Activated CD8-positive, alpha-beta T cell treated with anti-CD3 and anti-CD28 coated beads, Interleukin-2, amount 10 ng/mL, durations not matched to agents 7 days and 5 days (primary cell): ENCODE measurements at regions of chr11 and their contacts with region 1.

Region 1: GRCh38 chr11:14519917-14520746 is at the start of gene PSMA1:
- DNase-seq: peak; percentile 96
- ATAC-seq: peak; percentile 94
- H3K4me3 Mint-ChIP-seq: peak within 1 kb of the TSS; percentile 93
- H3K27ac Mint-ChIP-seq: peak within 1 kb of the TSS; percentile 94
- H3K4me1 Mint-ChIP-seq: peaks cover 29% of the 10 kb centered on the region
- H3K27me3 Mint-ChIP-seq: no peaks in the 10 kb centered on the region
- total RNA-seq, gene PSMA1: 211 to 215 TPM

Region 2: DNA sequence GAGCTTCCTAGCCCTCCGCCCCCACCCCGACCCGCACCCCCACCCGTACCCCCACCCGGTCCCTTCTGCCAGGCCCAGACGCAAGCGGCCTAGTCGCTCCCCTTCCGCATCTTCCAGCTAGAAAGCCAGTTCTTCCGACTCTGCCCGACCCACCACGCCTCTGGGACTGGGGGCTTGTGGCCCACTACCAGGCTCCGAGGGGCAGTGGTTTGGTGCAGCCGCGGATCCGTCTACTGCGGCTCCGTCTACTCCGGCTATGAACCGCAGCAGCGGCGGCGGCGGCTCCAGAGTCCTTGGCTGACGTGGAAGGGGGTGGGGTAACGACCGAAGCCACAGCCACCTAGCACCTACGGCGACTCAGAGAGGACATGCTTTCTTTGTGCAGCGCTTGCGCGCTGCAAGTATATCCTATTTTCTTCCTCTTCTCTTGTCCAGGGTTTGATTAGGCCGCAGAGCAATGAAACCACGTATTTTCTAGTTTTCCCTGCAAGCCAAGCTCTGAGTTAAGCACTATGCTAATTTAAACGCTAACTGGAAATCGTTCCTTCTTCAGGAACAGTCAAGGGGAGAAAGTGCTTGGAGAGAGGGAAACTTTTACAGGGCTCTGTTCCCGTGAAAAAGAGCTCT is 20.5 kb before region 1 on chr11 and contains the start of gene COPB1:
- CTCF ChIA-PET with region 1: interaction called, 7 read pairs
- POLR2A ChIA-PET with region 1: interaction called, 20 read pairs
- DNase-seq: peak; percentile 96
- ATAC-seq: peak; percentile 93
- H3K4me3 Mint-ChIP-seq: peak within 1 kb of the TSS; percentile 99
- H3K27ac Mint-ChIP-seq: peak within 1 kb of the TSS; percentile 96
- H3K4me1 Mint-ChIP-seq: peaks cover 47% of the 10 kb centered on the region
- H3K27me3 Mint-ChIP-seq: no peaks in the 10 kb centered on the region
- total RNA-seq, gene COPB1: 77.8 to 79.1 TPM